Common myeloid progenitor, CD34-positive (primary cell): ENCODE measurements at regions of chr7 and their contacts with region 1.

Region 1: DNA sequence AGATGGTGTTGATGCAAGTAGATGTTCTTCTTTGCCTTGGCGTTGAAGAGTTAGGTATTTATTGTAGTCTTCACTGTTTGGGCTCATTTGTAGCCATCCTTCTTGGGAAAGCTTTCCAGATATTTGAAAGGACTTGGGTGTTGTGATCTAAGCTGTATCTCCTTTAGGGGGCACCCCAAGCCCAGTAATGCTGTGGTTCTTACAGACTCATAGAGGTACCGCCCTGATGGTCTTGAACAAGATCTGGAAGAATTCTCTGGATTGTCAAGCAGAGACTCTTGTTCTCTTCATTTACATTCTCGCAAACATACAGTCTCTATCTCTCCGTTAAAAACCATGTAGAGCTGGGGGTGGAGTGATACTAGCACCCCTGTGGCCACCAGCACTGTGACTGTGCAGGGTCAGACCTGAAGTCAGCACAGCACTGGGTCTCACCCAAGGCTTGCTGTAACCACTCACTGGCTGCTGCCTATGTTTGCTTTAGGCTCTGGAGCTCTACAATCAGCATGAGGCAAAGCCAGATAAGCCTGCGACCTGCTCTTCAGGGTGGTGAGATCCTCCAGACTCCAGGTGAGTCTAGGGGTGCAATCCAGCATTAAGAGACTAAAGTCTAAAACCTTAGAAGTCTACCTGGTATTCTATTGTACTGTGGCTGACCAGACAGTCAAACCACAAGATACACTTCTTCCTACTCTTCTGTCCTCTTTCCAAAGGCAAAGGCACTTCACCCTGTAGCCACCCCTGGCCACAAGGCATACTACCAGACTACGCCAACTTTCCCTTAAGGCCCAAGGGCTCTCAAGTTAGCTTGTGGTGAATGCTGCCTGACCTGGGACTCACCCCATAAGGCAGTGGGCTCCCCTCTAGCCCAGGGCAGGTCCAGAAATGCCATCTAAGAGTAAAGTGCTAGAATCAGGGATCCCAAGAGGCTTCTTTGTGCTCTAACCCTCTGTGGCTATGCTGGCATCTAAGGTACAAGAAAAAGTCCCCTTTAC is 209.7 kb upstream of the TMEM196 start:
- DNase-seq: peak; percentile 68 to 80 (median 79)
- H3K4me3 ChIP-seq: no peak overlapping the region
- H3K27ac ChIP-seq: no peak overlapping the region
- H3K4me1 ChIP-seq: no peaks in the 10 kb centered on the region
- H3K27me3 ChIP-seq: no peaks in the 10 kb centered on the region

Region 2: DNA sequence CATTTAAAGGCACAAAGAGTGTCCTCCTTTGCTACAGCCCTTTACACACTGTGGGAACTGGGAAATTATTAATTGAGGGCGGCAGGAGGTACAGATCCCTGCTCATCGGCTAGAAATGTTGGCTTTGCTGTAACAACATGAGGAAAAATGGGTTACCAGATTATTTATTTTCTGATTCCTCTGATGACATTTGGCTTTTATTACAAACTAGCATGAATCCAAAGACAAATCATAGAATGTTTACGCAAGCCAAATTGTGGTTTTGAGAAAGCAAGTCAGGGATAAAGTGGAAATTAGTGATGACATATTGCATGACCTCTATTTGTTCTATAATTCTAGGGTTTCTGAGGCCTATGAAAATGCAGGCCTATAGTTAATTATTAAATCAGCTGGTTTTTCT is 83.6 kb before region 1 on chr7:
- CTCF ChIA-PET with region 1: no interaction called
- POLR2A ChIA-PET with region 1: no interaction called
- DNase-seq: no peak
- H3K4me3 ChIP-seq: no peak overlapping the region
- H3K27ac ChIP-seq: no peak overlapping the region
- H3K4me1 ChIP-seq: no peaks in the 10 kb centered on the region
- H3K27me3 ChIP-seq: no peaks in the 10 kb centered on the region

Region 3: DNA sequence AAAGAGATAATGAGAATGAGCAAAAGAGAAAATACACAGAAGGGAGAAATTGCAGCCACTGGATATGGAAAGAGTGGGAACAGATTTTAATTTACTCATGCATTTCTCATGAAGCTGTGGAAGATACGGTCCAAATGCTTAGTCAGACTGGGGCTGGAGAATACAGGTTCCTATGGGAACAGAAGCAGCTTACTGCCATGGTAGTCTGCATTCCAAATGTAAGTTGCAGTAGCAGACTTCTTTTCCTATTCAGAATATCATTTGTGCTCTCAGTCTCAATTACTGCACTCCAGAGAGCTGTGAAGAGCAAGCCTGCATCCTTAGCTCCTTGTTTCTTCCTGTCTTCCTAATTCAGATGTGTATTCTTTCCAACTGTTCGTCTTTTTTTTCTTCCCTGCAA is 18.9 kb before region 1 on chr7:
- CTCF ChIA-PET with region 1: no interaction called
- POLR2A ChIA-PET with region 1: no interaction called
- DNase-seq: no peak
- H3K4me3 ChIP-seq: no peak overlapping the region
- H3K27ac ChIP-seq: no peak overlapping the region
- H3K4me1 ChIP-seq: no peaks in the 10 kb centered on the region
- H3K27me3 ChIP-seq: no peaks in the 10 kb centered on the region

Region 4: DNA sequence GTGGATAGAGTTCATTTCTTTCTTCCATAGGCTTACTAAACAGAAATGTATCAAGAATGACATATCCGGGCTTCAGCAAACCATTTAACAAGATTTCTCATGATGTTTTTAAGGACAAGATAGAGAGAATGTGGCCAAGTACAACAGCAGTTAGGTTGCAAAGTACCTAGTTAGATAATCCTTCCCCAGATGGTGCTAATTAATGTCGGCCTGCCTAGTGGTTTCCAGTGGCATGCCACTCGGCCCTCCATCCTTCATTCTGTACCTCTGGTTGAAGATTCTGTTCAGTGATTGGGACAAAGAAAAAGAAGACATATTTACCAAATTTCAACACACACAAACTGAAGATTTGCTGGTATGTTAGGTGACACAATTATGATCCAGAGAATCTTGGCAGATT is 21.9 kb after region 1 on chr7:
- CTCF ChIA-PET with region 1: interaction called, 11 read pairs
- POLR2A ChIA-PET with region 1: no interaction called
- DNase-seq: no peak
- H3K4me3 ChIP-seq: no peak overlapping the region
- H3K27ac ChIP-seq: no peak overlapping the region
- H3K4me1 ChIP-seq: no peaks in the 10 kb centered on the region
- H3K27me3 ChIP-seq: no peaks in the 10 kb centered on the region

Region 5: DNA sequence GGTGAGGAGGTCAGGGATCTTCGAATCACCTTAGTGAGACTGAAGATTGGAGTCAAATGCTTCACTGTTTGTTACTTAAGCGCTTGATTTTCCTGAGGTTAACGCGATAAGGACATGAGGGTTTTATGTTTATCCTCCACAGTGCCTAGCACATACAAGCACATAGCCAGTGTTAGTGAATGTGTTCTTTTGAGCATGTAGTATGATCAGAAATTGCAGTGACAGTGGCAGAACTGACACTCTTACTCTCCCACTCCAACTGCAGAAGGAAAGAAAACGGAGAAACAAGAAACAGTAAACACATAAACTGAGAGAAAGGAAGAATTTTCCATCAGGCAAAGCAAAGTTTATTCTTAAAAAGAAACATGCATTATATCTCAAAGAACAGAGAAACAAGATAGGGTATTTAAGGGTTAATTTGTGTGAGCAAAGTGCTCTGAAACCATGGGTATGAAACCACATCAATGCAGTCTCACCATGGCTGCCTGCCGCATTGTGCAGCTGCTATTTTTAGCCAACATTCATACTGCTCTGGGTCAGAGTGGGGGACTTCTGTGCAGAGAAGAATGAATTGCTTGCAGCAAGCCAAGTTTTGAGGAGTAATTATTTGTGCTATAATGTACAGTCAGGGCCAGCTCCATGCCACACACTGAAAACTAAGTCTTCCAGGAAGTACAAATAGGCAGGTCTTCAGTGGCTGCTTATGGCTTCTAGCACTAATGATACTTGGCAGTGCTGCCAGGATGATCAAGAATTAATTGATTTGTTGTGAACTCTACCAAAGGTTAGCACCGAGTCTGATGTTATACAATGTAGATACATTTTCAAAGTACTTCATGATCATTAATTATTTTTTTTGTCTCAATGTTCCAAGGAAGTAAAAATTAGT is 82.1 kb after region 1 on chr7:
- CTCF ChIA-PET with region 1: no interaction called
- POLR2A ChIA-PET with region 1: no interaction called
- DNase-seq: peak; percentile 3 to 64 (median 46)
- H3K4me3 ChIP-seq: peak overlapping the region in 1 of 7 experiments; percentile 23
- H3K27ac ChIP-seq: no peak overlapping the region
- H3K4me1 ChIP-seq: peaks cover 3 to 16% (median 5%) of the 10 kb centered on the region in 4 experiments
- H3K27me3 ChIP-seq: no peaks in the 10 kb centered on the region

Region 6: GRCh38 chr7:20116869-20117268 is 133.7 kb after region 1 on chr7:
- CTCF ChIA-PET with region 1: no interaction called
- POLR2A ChIA-PET with region 1: no interaction called
- DNase-seq: no peak
- H3K4me3 ChIP-seq: no peak overlapping the region
- H3K27ac ChIP-seq: no peak overlapping the region
- H3K4me1 ChIP-seq: peaks cover 7 to 21% (median 9%) of the 10 kb centered on the region in 4 experiments
- H3K27me3 ChIP-seq: no peaks in the 10 kb centered on the region

Region 7: GRCh38 chr7:20310963-20311742 is 328.0 kb after region 1 on chr7:
- CTCF ChIA-PET with region 1: interaction called, 28 read pairs
- POLR2A ChIA-PET with region 1: no interaction called
- DNase-seq: peak; percentile 63 to 83 (median 82)
- H3K4me3 ChIP-seq: no peak overlapping the region
- H3K27ac ChIP-seq: no peak overlapping the region
- H3K4me1 ChIP-seq: peaks cover 3 to 17% (median 5%) of the 10 kb centered on the region in 4 experiments
- H3K27me3 ChIP-seq: no peaks in the 10 kb centered on the region